Heart right ventricle (tissue), 16 donors: ENCODE measurements at regions of chr18 and their contacts with region 1.

Region 1: DNA sequence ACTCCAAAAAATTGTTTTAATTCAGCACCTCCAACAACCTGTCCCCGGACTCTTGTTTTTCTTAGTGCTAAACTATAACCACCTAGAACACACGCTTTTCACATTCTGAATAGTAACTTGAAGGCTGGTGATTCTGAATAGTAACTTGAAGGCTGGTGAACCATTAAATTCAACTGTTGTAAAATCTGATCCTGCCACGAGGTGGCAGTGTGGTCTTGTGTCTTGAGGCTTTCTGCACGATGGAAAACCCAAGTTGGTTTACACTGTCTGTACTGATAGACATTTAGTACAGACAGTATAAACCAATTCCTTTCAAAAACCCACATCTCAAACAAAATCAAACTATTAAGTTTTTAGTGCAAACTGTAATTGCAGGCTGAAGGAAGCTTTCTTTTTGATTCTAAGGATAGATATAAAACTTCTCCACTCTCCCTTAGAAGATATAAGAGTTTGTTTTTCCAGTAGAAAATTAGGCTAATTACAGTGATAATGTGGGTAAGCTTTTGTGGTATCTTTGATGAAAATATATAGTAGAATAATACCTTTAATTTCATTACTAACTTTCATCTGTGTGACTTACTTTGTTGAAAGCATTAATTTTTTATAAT is 57.6 kb downstream of the VAPA start:
- DNase-seq: peak in 1 of 2 donors; percentile 83
- ATAC-seq: peak; percentile 48 to 82 (median 67)
- H3K4me3 ChIP-seq: no peak overlapping the region
- H3K27ac ChIP-seq: no peak overlapping the region
- H3K4me1 ChIP-seq: peaks cover 0 to 23% (median 3%) of the 10 kb centered on the region in 9 donors
- H3K27me3 ChIP-seq: peaks cover 0 to 24% (median 0%) of the 10 kb centered on the region in 7 donors
- CTCF ChIP-seq: peak; percentile 64 to 89 (median 84)

Region 2: GRCh38 chr18:10025711-10026670 is 54.6 kb after region 1 on chr18:
- intact Hi-C with region 1: loop called in 1 of 10 experiments (anchors 5 kb)
- DNase-seq: no peak
- ATAC-seq: peak in 6 of 8 donors; percentile 61 to 78 (median 71)
- H3K4me3 ChIP-seq: no peak overlapping the region
- H3K27ac ChIP-seq: peak overlapping the region in 7 of 10 donors; percentile 23 to 55 (median 50)
- H3K4me1 ChIP-seq: peaks cover 0 to 10% (median 0%) of the 10 kb centered on the region in 9 donors
- H3K27me3 ChIP-seq: no peaks in the 10 kb centered on the region
- CTCF ChIP-seq: no peak